ENCODE measurements at regions of chr9 and their contacts with region 1.

Region 1: GRCh38 chr9:115204904-115205453 is 87.0 kb upstream of the TNC start:
- DNase-seq: no peak
- H3K4me3 Mint-ChIP-seq: no peak overlapping the region
- H3K27ac Mint-ChIP-seq: no peak overlapping the region
- H3K4me1 Mint-ChIP-seq: peaks cover 15% of the 10 kb centered on the region
- H3K27me3 Mint-ChIP-seq: peaks cover 33% of the 10 kb centered on the region

Region 2: GRCh38 chr9:115035841-115036612 is 169.0 kb before region 1 on chr9:
- CTCF ChIA-PET with region 1: no interaction called
- intact Hi-C with region 1: loop called (anchors 5 kb)
- DNase-seq: peak; percentile 40
- H3K4me3 Mint-ChIP-seq: no peak overlapping the region
- H3K27ac Mint-ChIP-seq: peak overlapping the region; percentile 70
- H3K4me1 Mint-ChIP-seq: peaks cover 19% of the 10 kb centered on the region
- H3K27me3 Mint-ChIP-seq: peaks cover 3% of the 10 kb centered on the region

Region 3: DNA sequence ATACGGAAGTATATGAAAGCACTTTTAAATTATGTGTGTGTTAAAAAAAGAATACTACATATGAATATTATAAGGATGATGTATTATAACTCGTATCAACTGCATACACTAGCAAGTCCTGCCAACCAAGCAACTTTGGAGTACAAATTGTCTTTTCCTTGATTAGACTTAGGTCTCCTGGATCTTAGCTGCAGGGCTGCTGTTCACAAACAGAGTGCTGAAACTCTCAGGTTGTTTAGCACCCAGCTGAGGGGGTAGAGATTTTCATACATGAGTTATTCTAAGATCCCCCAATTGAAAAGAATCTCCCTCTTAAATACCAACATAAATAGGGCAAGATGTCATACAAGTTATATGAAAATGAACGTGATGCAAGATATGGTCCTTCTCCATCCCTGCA is 62.8 kb after region 1 on chr9:
- CTCF ChIA-PET with region 1: no interaction called
- intact Hi-C with region 1: no loop called
- DNase-seq: no peak
- H3K4me3 Mint-ChIP-seq: no peak overlapping the region
- H3K27ac Mint-ChIP-seq: no peak overlapping the region
- H3K4me1 Mint-ChIP-seq: no peaks in the 10 kb centered on the region
- H3K27me3 Mint-ChIP-seq: peaks cover 7% of the 10 kb centered on the region

Measured in activated naive CD4-positive, alpha-beta T cell treated with anti-CD3 and anti-CD28 coated beads for 36 hours (primary cell).